GM12878 (cell line): ENCODE measurements at regions of chr6 and their contacts with region 1.

Region 1: DNA sequence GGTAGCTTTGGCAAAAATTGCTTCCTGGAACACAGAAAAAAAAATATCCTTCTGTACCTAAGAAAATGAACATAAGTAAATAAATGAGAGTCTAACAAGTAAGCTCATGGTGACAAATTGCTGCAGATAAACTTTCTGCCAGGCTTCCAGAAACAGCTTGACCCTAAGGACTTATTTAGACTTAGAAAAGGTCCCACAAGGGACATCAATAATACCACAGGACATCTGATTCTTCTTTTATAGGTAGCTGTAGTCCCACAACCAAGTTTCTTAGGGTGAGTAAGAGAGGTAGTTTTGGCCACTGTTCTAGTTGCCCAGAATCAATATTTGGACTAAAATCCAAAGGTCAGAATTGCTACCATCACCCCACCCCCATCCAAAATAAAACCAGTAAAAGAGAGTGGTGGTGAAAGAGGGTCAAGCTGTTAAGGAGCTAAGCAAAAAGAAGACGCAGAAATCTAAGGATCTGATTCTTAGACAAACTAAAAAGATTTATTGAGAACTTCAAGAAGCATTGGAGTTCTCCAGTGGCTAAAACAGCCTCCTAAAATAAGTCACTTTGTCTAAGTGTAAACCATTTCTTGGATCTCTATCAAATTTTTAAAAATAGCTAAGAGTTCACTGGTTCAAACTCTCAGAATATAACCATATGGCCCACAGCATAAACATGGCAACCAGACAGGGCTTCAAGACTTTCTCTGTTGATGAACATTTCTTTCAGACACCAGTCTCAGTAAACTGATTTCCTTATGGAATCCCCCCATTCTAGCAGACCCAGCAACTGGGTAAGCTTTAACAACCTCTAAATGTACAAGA is 180.6 kb downstream of the PTPRK start:
- DNase-seq: no peak
- ATAC-seq: no peak
- H3K4me3 ChIP-seq: no peak overlapping the region
- H3K27ac ChIP-seq: no peak overlapping the region
- H3K4me1 ChIP-seq: no peaks in the 10 kb centered on the region
- H3K27me3 ChIP-seq: no peaks in the 10 kb centered on the region
- CTCF ChIP-seq: no peak
- EP300 ChIP-seq: no peak
- POLR2A ChIP-seq: no peak
- RAD21 ChIP-seq: no peak

Region 2: GRCh38 chr6:127869772-127870404 is 470.0 kb before region 1 on chr6:
- CTCF ChIA-PET with region 1: no interaction called
- POLR2A ChIA-PET with region 1: no interaction called
- RAD21 ChIA-PET with region 1: no interaction called
- SMC1A ChIA-PET with region 1: no interaction called
- in situ Hi-C with region 1: loop called (anchors 10 kb)
- intact Hi-C with region 1: no loop called
- DNase-seq: no peak
- ATAC-seq: no peak
- H3K4me3 ChIP-seq: no peak overlapping the region
- H3K27ac ChIP-seq: no peak overlapping the region
- H3K4me1 ChIP-seq: no peaks in the 10 kb centered on the region
- H3K27me3 ChIP-seq: no peaks in the 10 kb centered on the region
- CTCF ChIP-seq: no peak
- EP300 ChIP-seq: no peak
- POLR2A ChIP-seq: no peak
- RAD21 ChIP-seq: no peak

Region 3: DNA sequence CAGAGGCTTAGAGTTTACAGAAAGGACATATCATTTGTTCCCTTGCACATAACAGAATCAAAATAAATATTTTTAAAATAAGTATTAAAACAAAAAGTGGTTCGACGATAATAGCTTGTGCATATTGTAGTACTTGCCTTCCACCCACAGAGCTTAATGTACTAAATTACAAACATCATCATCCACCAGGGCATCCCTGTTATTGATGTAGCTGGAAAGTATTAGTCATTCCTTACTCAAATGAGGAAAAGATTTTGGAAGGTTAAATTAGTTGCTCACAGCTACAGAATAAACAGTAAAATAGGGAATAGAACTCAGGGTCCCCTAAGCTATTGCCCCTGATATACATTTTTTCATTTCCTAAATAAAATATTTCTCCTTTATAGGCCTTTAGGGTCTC is 30.2 kb after region 1 on chr6:
- CTCF ChIA-PET with region 1: no interaction called
- POLR2A ChIA-PET with region 1: no interaction called
- RAD21 ChIA-PET with region 1: no interaction called
- SMC1A ChIA-PET with region 1: no interaction called
- in situ Hi-C with region 1: no loop called
- intact Hi-C with region 1: no loop called
- DNase-seq: no peak
- ATAC-seq: no peak
- H3K4me3 ChIP-seq: no peak overlapping the region
- H3K27ac ChIP-seq: no peak overlapping the region
- H3K4me1 ChIP-seq: no peaks in the 10 kb centered on the region
- H3K27me3 ChIP-seq: no peaks in the 10 kb centered on the region
- CTCF ChIP-seq: no peak
- EP300 ChIP-seq: no peak
- POLR2A ChIP-seq: no peak
- RAD21 ChIP-seq: no peak